PC-3 (cell line): ENCODE measurements at regions of chr14 and their contacts with region 1.

Region 1: DNA sequence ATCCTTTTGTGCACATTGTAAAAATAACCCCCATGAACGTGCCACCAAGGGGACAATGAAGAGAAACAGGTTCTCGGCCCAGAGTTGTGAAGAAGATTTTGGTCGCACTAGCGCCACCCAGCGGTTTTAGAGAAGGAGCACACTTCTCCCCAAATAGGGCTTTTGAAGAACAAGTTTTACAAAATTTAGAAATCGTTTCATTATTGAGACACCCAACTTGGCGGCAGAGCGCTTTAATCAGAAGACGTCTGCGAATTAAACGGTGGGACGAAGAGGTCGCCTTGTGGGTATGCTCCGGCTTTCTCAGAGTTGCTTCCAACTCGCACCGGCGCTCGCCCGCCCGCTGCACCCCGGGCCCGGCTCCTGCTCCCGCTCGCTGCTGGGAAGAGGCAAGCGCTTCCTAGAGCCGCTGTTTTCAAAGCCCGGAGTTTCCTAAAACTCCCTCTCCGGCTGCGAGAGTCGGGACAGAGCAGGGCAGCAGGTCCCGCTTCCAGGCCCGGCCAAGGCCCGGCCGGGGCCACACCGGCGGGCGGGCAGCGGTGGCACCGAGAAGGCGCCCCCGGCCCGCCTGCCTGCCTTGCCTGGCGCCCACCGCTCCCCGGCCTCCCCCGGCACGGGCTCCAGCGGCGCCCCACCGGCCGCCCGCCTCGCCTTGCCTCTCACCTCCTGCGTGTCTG is 673 bp downstream of the FOXA1 start:
- DNase-seq: peak; percentile 92
- ATAC-seq: no peak
- H3K4me3 ChIP-seq: peak overlapping the region; percentile 96
- H3K27ac ChIP-seq: peak overlapping the region; percentile 99
- H3K4me1 ChIP-seq: peaks cover 28% of the 10 kb centered on the region
- H3K27me3 ChIP-seq: no peaks in the 10 kb centered on the region
- CTCF ChIP-seq: peak; percentile 92

Region 2: GRCh38 chr14:37824939-37825712 is 230.8 kb after region 1 on chr14:
- CTCF ChIA-PET with region 1: no interaction called
- POLR2A ChIA-PET with region 1: interaction called, 3 read pairs
- intact Hi-C with region 1: loop called (anchors 2 kb)
- DNase-seq: peak; percentile 55
- ATAC-seq: peak; percentile 66
- H3K4me3 ChIP-seq: no peak overlapping the region
- H3K27ac ChIP-seq: peak overlapping the region; percentile 10
- H3K4me1 ChIP-seq: peaks cover 33% of the 10 kb centered on the region
- H3K27me3 ChIP-seq: no peaks in the 10 kb centered on the region
- CTCF ChIP-seq: no peak